Activated CD4-positive, alpha-beta memory T cell treated with anti-CD3 and anti-CD28 coated beads, Interleukin-2, amount 10 ng/mL, durations not matched to agents 7 days and 5 days (primary cell): ENCODE measurements at regions of chr3 and their contacts with region 1.

Region 1: DNA sequence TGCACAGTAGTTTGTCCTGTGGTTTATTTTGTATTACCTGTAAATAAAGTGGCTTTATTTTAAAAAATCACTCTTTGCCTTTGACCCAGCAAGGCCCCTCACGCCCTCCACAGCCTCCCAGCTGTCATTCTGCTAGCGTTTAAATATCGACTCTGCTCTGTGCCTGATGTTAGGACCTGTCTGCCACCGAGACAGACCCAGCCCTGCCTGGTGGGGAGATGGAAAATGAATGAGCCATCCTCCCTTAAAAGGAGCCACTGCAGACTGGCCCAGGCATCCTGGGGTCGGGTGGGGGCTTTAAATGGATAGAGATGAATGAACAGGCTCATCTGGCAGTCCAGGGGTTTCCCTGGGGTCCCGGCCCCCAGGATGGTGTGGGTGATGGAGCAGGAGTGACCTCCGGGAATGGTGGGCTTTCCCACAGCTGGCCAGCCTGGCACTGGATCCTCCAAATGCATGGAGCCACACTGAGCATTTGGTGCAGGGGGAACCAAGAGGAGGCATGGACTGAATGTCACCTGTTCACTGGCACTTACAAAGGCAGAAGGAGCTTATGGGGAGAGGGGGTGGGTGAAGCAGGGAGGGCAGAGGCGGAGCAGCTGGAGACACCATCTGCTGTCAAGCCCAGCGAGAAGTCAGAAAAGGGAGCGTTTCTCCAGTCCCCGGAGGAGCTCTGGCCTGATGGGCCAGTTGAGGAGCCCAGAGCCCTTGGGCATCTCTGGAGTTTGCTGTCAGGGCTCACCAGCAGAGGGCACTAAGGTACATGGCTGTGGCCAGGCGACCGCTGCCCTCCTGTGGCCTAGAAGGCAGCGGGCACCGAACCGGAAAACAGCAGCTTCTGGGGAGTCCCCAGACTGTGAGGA is 11.9 kb downstream of the GRM2 start:
- DNase-seq: peak; percentile 83
- H3K4me3 Mint-ChIP-seq: no peak overlapping the region
- H3K27ac Mint-ChIP-seq: no peak overlapping the region
- H3K4me1 Mint-ChIP-seq: peaks cover 38% of the 10 kb centered on the region
- H3K27me3 Mint-ChIP-seq: no peaks in the 10 kb centered on the region

Region 2: DNA sequence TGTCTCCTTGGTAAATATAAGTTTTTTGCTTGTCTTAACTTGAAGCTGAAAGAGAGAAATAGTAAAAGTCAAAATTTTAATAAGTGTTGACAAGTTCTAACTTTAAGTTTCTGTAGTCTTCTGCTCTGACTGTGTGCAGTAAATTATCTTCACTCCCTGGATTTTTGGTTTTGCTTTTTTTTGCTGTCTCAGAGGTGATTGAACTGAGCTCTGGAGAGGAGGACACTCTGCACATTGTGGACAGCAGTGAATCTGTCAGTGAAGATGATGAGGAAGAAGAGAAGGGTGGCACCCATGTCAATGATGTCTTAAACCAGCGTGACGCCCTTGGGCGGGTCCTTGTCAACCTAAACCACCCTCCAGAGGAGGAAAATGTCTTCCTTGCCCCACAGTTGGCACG is 88.3 kb before region 1 on chr3:
- CTCF ChIA-PET with region 1: no interaction called
- POLR2A ChIA-PET with region 1: no interaction called
- DNase-seq: no peak
- H3K4me3 Mint-ChIP-seq: no peak overlapping the region
- H3K27ac Mint-ChIP-seq: no peak overlapping the region
- H3K4me1 Mint-ChIP-seq: no peaks in the 10 kb centered on the region
- H3K27me3 Mint-ChIP-seq: no peaks in the 10 kb centered on the region

Region 3: GRCh38 chr3:51729042-51729633 is 10.4 kb after region 1 on chr3:
- CTCF ChIA-PET with region 1: interaction called, 15 read pairs
- POLR2A ChIA-PET with region 1: interaction called, 3 read pairs
- DNase-seq: no peak
- H3K4me3 Mint-ChIP-seq: no peak overlapping the region
- H3K27ac Mint-ChIP-seq: no peak overlapping the region
- H3K4me1 Mint-ChIP-seq: peaks cover 27% of the 10 kb centered on the region
- H3K27me3 Mint-ChIP-seq: peaks cover 3% of the 10 kb centered on the region

Region 4: GRCh38 chr3:51734572-51734907 is 15.8 kb after region 1 on chr3:
- CTCF ChIA-PET with region 1: interaction called, 15 read pairs
- POLR2A ChIA-PET with region 1: interaction called, 4 read pairs
- DNase-seq: peak; percentile 33
- H3K4me3 Mint-ChIP-seq: no peak overlapping the region
- H3K27ac Mint-ChIP-seq: peak overlapping the region; percentile 44
- H3K4me1 Mint-ChIP-seq: peaks cover 24% of the 10 kb centered on the region
- H3K27me3 Mint-ChIP-seq: peaks cover 26% of the 10 kb centered on the region

Region 5: DNA sequence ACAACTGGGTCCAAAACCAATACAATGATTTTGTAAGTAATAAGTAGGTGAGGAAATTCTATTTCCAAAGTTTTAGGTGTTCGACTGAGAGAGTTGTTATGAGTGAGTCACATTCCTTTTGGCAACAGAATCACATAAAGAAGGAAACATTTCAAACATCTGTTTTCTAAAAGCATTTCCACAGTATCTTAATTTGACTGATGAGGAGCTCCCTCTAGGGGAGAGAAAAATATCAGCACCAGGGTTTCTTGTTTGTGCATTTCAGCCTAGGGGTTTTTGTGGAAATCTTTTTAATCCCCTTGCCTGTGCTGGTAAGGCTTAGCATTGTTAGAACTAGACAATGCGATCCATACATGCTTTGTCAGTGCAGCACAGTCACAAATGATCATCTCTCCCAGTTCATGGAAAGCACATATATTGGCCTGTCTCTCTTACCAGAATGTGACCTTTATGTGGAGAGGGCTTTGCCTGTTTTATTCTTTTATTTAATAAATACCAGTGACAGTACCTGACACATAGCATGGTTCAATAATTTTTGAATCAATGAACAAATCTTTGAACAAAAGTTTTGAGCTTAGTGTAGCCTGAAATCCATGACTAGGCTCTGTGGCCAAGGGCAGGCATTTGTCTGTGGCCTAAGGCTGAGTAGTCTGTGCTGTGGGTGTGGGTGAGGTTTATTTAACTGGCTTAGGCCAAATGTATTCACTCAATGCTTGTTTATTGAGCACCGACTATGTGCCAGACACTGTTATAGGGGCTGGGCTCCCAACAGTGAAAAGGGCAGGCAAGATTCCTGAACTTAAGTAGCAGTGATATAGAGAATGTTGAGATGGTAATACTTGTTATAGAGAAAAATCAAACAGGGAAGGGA is 81.3 kb after region 1 on chr3:
- CTCF ChIA-PET with region 1: interaction called, 73 read pairs
- POLR2A ChIA-PET with region 1: interaction called, 4 read pairs
- DNase-seq: no peak
- H3K4me3 Mint-ChIP-seq: no peak overlapping the region
- H3K27ac Mint-ChIP-seq: no peak overlapping the region
- H3K4me1 Mint-ChIP-seq: peaks cover 60% of the 10 kb centered on the region
- H3K27me3 Mint-ChIP-seq: peaks cover 14% of the 10 kb centered on the region

Region 6: DNA sequence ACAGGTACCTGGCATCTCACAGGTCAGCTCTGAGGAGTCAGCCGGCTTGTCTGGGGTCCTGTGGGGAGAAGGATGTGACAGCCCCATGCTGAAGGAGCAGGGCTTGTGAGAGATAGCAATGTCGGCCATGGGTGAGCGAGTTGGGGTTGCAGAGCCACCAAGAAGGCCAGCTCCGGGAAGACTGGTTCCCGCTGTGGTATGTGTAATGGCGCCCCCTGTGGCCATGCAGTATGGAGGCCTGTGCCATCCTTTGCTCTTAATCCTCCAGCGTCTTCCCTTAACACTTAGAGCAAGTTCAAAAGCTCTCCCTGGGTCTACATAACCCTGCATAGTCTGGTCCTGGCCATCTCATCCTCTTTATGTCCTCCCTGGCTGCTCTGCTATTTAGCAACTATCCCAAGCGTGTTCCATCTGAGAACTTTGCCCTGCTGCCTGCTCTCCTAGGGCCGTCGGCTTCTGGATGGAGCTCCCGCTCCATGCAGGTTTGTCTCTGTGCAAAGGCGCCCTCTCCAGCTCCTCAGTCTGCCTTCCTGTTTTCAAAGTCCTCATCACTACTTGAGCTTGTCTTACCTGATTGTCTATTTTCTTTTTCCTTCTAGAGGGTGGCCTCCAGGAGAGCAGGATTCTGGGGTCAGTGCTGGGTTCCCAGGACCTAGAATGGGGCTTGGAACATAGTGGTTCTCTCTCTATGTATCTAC is 101.1 kb after region 1 on chr3:
- CTCF ChIA-PET with region 1: no interaction called
- POLR2A ChIA-PET with region 1: no interaction called
- DNase-seq: no peak
- H3K4me3 Mint-ChIP-seq: no peak overlapping the region
- H3K27ac Mint-ChIP-seq: no peak overlapping the region
- H3K4me1 Mint-ChIP-seq: peaks cover 34% of the 10 kb centered on the region
- H3K27me3 Mint-ChIP-seq: peaks cover 42% of the 10 kb centered on the region